Activated T-helper 1 cell treated with anti-CD3 and anti-CD28 coated beads, Interleukin-12 subunit alpha, Interleukin-12 subunit beta, Interleukin-2, Interleukin-4 antibody, amounts not matched to agents 30 ng/mL and 10 ng/mL and 1 ng/mL, durations not matched to agents 14 hours and 24 hours and 36 hours (primary cell): ENCODE measurements at regions of chr3 and their contacts with region 1.

Region 1: DNA sequence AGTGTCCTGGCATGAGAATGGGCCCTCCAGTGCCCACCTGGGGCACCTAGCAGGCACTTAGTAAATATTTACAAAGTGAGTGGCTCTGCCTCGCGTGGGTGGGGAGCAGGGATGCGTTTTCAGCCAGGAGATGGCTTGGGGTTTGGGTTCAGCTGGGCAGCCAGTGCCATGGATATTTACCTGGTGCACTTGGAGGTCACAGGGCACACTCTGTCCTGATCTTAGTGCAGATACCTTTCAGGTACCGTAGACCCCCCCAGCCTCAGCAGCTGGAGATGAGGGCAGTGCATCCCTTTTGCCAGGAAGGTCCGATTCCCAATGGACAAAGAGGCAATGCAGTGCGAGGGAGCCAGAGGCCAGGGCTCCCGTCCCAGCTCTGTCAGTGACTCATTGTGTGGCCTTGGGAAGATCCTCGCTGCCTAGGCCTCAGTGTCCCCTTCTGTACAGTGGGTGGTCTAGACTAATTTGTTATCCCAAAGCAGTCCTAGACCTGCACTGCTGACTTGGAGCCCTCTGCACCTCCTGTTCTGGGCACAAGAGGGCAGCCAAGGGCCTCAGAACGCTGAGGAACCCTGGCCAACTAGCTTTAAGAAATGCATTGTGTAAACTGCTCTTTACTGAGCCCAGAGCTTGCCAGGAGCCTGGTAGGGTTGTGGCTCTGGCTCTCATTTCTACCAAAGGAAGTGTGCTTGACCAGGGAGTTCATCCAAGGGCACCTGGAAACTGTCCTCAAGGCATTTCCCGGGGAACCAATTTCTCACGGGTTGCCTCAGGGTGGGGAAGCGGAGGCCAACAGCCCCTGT is 16.0 kb downstream of the HDAC11 start:
- DNase-seq: peak; percentile 60
- H3K4me3 Mint-ChIP-seq: no peak overlapping the region
- H3K27ac Mint-ChIP-seq: no peak overlapping the region
- H3K4me1 Mint-ChIP-seq: no peaks in the 10 kb centered on the region
- H3K27me3 Mint-ChIP-seq: no peaks in the 10 kb centered on the region

Region 2: DNA sequence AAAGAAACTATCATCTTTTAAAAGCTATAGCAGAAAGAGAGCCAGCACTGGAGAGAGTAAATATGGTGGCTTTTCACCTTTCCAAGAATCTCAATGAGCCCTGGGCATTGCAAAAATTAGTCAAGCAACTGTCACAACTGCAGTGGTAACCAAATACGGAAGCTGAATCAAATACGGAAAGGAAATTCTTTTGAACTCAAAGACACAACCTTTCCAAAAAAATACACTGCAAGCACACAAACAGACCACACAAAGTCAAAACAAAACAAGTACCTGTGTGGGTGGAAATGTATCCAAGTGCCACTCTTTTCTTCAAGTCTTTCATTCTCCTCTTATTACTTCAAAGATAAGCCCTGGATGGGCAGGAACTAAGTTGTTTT is 1870.0 kb before region 1 on chr3:
- intact Hi-C with region 1: no loop called
- DNase-seq: peak; percentile 42
- H3K4me3 Mint-ChIP-seq: peak overlapping the region; percentile 39
- H3K27ac Mint-ChIP-seq: peak overlapping the region; percentile 71
- H3K4me1 Mint-ChIP-seq: peaks cover 69% of the 10 kb centered on the region
- H3K27me3 Mint-ChIP-seq: no peaks in the 10 kb centered on the region

Region 3: GRCh38 chr3:13479581-13480339 is 16.4 kb before region 1 on chr3 and contains the start of gene HDAC11:
- intact Hi-C with region 1: no loop called
- DNase-seq: peak; percentile 98
- H3K4me3 Mint-ChIP-seq: peak within 1 kb of the TSS; percentile 88
- H3K27ac Mint-ChIP-seq: peak within 1 kb of the TSS; percentile 84
- H3K4me1 Mint-ChIP-seq: peaks cover under 1% of the 10 kb centered on the region
- H3K27me3 Mint-ChIP-seq: peaks cover 7% of the 10 kb centered on the region
- total RNA-seq, gene HDAC11: 1.4 and 2.0 TPM in 2 replicates

Region 4: DNA sequence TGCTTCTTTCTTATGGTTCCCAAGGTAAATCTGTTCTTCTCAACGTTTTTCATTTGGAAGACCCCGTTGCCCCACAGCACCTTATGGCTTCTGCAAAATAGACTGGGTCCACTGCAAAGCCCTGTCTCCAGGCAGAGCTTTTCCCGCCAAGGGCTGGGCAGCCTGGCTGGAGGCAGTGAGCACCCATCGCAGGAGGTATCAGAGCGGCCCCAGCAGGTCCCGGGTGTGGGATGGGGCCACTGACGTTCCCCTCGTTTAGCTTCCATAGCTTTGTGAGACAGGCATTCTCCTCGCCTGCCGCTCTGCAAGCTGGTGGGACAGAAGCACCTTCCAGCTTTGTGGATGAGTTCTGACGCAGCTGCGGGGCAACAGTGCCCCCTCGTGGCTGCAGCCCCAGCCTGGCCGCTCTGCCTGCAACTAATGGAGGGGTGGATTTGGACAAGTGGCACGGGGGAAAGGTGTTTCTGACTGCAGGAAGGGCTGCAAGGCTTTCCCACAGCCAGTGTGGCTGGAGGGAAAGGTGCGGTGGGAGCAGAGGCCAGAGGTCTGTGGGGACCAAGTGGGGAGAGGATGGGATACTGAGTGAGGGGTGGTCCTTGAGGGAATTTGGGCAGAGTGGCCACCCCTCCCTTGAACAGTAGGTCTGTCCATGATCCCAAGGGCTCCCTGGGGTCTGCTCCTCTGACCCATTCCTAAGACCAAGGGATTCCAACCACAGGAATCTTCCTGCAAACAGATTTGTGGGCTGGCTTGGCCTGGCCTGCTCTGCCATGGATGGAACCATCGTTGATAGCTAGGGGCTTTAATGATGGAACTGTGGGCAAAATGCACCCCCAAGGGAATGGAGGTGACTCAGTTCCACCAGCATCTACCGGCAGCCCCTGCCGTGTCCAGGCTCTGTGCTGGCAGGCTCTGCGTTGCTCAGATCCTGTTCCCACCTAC is 152.2 kb after region 1 on chr3:
- intact Hi-C with region 1: loop called (anchors 1 kb)
- DNase-seq: peak; percentile 57
- H3K4me3 Mint-ChIP-seq: no peak overlapping the region
- H3K27ac Mint-ChIP-seq: no peak overlapping the region
- H3K4me1 Mint-ChIP-seq: peaks cover 6% of the 10 kb centered on the region
- H3K27me3 Mint-ChIP-seq: peaks cover 46% of the 10 kb centered on the region

Region 5: GRCh38 chr3:13879655-13880204 is 383.6 kb after region 1 on chr3 and contains the start of gene WNT7A:
- intact Hi-C with region 1: loop called (anchors 2 kb)
- DNase-seq: no peak
- H3K4me3 Mint-ChIP-seq: no peak within 1 kb of the TSS
- H3K27ac Mint-ChIP-seq: no peak within 1 kb of the TSS
- H3K4me1 Mint-ChIP-seq: no peaks in the 10 kb centered on the region
- H3K27me3 Mint-ChIP-seq: peaks cover 65% of the 10 kb centered on the region
- total RNA-seq, gene WNT7A: not detected in 2 replicates